HepG2 (cell line): ENCODE measurements at regions of chr18 and their contacts with region 1.

Region 1: GRCh38 chr18:48951448-48952286 is 902 bp upstream of the SMAD7 start:
- DNase-seq: peak; percentile 82
- ATAC-seq: peak; percentile 48
- H3K4me3 ChIP-seq: peak overlapping the region; percentile 91 to 100 (median 97)
- H3K27ac ChIP-seq: peak overlapping the region; percentile 87
- H3K4me1 ChIP-seq: peaks cover 34% of the 10 kb centered on the region
- H3K27me3 ChIP-seq: no peaks in the 10 kb centered on the region; a peak in 2 of 5 replicates
- CTCF ChIP-seq: peak; percentile 27; the same call in 1 of the 2 replicates
- EP300 ChIP-seq: peak in 1 of 2 experiments; percentile 20; a peak in 1 of 4 replicates
- POLR2A ChIP-seq: peak in 1 of 2 experiments; percentile 27; a peak in 1 of 4 replicates
- RAD21 ChIP-seq: peak; percentile 54; the same call in 1 of the 2 replicates

Region 2: GRCh38 chr18:48781163-48781987 is 170.3 kb before region 1 on chr18:
- CTCF ChIA-PET with region 1: no interaction called
- POLR2A ChIA-PET with region 1: interaction called, 4 read pairs
- in situ Hi-C with region 1: no loop called
- intact Hi-C with region 1: loop called (anchors 5 kb)
- DNase-seq: peak; percentile 92
- ATAC-seq: peak; percentile 87
- H3K4me3 ChIP-seq: peak overlapping the region; percentile 45 to 71 (median 46)
- H3K27ac ChIP-seq: peak overlapping the region; percentile 98
- H3K4me1 ChIP-seq: peaks cover 55% of the 10 kb centered on the region
- H3K27me3 ChIP-seq: no peaks in the 10 kb centered on the region
- CTCF ChIP-seq: peak; percentile 11; the same call in 1 of the 2 replicates
- EP300 ChIP-seq: peak; percentile 50 to 74; a peak in 2 of 4 replicates
- POLR2A ChIP-seq: peak; percentile 57 to 65; a peak in 2 of 4 replicates
- RAD21 ChIP-seq: peak; percentile 43; the same call in 1 of the 2 replicates

Region 3: DNA sequence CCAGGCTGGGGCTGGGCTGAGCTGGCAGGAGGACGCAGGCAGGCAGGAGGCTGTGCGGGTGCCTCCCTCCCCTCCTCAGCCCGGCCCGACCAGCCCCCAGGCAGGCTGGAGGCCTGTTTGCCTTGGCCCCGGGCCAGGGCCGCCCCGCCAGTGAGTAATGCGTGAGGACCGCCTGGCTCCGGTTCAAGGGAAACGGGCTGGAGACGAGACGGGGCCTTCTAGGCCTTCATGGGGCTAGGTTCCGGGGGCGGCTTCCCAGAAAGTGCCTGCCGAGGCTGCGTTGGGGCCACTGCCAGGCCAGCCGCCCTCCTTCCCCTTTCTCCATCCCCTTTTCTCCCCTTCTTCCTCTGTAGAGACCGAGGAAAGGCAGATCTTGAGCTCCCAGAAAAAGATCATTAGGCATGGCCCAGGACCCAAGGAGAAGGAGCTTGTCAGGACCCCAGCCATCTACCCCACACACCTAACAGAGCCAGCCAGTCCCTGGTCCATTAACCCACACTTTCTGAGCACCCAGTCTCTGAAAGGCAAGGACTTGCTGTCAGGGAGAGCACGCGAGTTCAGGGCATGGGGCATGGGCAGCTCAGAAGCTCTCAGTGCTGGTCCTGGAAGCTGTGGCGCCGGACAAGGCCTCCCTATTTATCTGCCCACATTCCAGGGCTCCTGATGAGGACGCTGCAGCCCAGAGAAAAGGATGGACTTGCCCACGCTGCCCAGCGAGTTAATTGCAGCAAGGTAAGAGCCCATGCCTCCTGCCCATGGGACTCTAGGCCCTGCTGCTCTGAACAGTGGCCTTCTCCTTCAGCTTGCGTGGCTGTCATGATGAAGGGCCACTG is 49.4 kb before region 1 on chr18:
- CTCF ChIA-PET with region 1: no interaction called
- POLR2A ChIA-PET with region 1: interaction called, 25 read pairs
- in situ Hi-C with region 1: loop called (anchors 5 kb)
- intact Hi-C with region 1: loop called (anchors 2 kb)
- DNase-seq: peak; percentile 86
- ATAC-seq: peak; percentile 89
- H3K4me3 ChIP-seq: peak overlapping the region; percentile 51 to 73 (median 57); a peak in 5 of 6 replicates
- H3K27ac ChIP-seq: peak overlapping the region; percentile 78
- H3K4me1 ChIP-seq: peaks cover 48% of the 10 kb centered on the region
- H3K27me3 ChIP-seq: no peaks in the 10 kb centered on the region
- CTCF ChIP-seq: peak; percentile 65
- EP300 ChIP-seq: peak in 1 of 2 experiments; percentile 85; a peak in 2 of 4 replicates
- POLR2A ChIP-seq: peak in 1 of 2 experiments; percentile 52; a peak in 2 of 4 replicates
- RAD21 ChIP-seq: no peak

Region 4: DNA sequence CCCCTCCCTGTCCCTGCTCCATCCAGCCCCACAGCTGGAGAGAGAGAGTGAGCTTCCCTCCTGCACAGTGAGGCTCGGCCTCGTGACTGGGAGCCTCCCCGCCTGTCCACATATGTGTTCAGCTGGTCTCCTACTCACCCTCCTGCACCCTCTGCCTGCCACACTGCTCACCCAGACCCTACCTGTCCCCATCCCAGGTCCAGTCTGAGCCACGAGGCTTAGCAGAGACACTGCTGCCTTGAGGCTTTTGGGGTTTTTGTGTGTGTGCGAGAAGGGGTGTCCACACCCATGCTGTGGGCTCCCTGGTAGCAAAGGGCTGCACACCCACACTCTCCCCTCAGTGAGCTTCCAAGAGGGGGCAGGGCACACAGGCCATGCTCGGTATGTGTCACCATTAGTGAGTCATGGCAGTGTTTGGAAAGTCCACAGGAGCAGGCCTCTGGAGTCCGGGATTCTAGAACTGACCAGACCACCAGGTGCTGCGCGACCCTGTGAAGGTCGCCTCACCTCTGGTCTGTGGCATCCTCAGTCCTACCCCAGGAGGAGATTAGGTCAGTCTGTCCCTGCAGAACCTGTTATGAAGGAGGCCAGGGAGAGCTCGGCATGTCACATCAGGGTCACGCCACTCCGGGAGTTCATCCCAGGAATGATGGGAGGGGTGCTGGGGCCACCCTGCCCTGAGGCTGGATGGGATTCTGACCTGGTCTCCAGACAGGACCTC is 39.0 kb after region 1 on chr18:
- CTCF ChIA-PET with region 1: no interaction called
- POLR2A ChIA-PET with region 1: interaction called, 11 read pairs
- in situ Hi-C with region 1: no loop called
- intact Hi-C with region 1: no loop called
- DNase-seq: peak; percentile 76
- ATAC-seq: peak; percentile 75
- H3K4me3 ChIP-seq: peak overlapping the region in 1 of 3 experiments; percentile 58; a peak in 2 of 6 replicates
- H3K27ac ChIP-seq: no peak overlapping the region
- H3K4me1 ChIP-seq: peaks cover 79% of the 10 kb centered on the region
- H3K27me3 ChIP-seq: peaks cover 1 to 28% of the 10 kb centered on the region in 2 experiments; a peak in 3 of 5 replicates
- CTCF ChIP-seq: peak; percentile 43
- EP300 ChIP-seq: peak in 1 of 2 experiments; percentile 33; a peak in 1 of 4 replicates
- POLR2A ChIP-seq: no peak
- RAD21 ChIP-seq: 0 out of 2 replicates have a peak, but pooled peaks have one; percentile 12

Region 5: DNA sequence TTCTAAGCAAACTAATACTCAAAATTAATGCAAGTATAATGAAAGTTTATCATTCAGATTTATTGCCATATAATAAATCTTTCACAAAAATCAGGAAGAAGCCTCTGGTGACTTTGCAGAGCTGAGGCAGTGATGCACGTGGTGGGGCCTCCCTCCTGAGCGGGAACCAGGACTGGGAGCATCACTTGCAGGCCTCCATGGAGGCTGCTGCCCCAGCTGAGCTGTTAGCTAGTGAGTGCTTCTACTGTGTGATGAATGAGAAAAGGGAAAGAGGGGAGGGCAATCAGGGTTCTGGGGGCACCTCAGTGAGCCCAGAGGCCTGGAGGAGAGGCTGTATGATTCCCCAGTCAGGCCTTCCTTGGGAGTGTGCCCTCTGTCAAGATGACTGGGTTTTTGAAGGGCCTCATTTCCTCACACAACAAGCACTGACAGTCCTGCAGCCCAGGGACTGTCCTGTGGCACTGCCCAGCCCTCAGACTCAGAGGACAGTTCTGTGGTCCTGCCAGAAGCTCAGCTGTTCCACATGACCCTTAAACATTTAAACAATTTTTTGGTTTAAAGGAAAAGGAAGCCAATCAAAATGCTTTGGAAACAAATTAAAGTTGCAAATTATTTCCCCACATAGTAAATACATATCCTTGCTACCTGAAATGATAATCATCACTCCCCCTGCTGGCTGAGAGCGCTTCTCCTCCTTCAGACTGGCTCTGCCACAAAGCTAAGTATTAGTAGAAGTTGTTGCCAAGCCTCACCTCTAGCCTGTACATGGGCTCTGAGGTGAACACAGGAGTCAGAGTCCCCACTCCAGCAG is 90.0 kb after region 1 on chr18:
- CTCF ChIA-PET with region 1: no interaction called
- POLR2A ChIA-PET with region 1: interaction called, 3 read pairs
- in situ Hi-C with region 1: no loop called
- intact Hi-C with region 1: loop called (anchors 5 kb)
- DNase-seq: peak; percentile 40
- ATAC-seq: peak; percentile 85
- H3K4me3 ChIP-seq: no peak overlapping the region
- H3K27ac ChIP-seq: no peak overlapping the region
- H3K4me1 ChIP-seq: no peaks in the 10 kb centered on the region
- H3K27me3 ChIP-seq: no peaks in the 10 kb centered on the region
- CTCF ChIP-seq: peak; percentile 65
- EP300 ChIP-seq: no peak
- POLR2A ChIP-seq: no peak
- RAD21 ChIP-seq: 0 out of 2 replicates have a peak, but pooled peaks have one; percentile 42